ENCODE measurements at regions of chr1 and their contacts with region 1.

Region 1: GRCh38 chr1:181134543-181135362 is 46.3 kb downstream of the IER5 start:
- DNase-seq: peak; percentile 84 to 92
- H3K4me3 ChIP-seq: peak overlapping the region; percentile 26; the same call in 1 of the 2 replicates
- H3K27ac ChIP-seq: peak overlapping the region; percentile 92
- H3K4me1 ChIP-seq: peaks cover 71% of the 10 kb centered on the region
- H3K27me3 ChIP-seq: no peaks in the 10 kb centered on the region
- CTCF ChIP-seq: no peak

Region 2: DNA sequence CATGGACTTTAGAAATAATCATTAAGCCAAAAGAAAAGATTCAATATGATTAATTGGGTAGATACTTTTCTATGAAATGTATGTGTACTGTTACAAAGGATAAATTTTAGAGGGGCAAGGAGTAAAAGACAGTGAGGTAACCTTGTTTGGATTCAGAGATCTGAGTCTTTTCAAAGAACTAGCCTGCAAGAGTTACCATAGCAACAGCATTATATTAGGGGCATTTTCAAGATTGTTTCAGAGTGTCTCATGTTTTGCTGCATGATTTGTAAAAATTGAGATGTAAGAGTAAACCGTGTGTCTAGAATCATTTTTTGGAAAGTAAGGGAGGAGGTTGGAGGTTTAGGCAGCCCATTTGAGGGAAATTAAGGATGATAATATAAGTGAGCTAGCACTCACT is 292.7 kb before region 1 on chr1:
- CTCF ChIA-PET with region 1: no interaction called
- POLR2A ChIA-PET with region 1: no interaction called
- intact Hi-C with region 1: no loop called
- DNase-seq: no peak
- H3K4me3 ChIP-seq: no peak overlapping the region
- H3K27ac ChIP-seq: no peak overlapping the region
- H3K4me1 ChIP-seq: no peaks in the 10 kb centered on the region
- H3K27me3 ChIP-seq: no peaks in the 10 kb centered on the region
- CTCF ChIP-seq: no peak

Region 3: DNA sequence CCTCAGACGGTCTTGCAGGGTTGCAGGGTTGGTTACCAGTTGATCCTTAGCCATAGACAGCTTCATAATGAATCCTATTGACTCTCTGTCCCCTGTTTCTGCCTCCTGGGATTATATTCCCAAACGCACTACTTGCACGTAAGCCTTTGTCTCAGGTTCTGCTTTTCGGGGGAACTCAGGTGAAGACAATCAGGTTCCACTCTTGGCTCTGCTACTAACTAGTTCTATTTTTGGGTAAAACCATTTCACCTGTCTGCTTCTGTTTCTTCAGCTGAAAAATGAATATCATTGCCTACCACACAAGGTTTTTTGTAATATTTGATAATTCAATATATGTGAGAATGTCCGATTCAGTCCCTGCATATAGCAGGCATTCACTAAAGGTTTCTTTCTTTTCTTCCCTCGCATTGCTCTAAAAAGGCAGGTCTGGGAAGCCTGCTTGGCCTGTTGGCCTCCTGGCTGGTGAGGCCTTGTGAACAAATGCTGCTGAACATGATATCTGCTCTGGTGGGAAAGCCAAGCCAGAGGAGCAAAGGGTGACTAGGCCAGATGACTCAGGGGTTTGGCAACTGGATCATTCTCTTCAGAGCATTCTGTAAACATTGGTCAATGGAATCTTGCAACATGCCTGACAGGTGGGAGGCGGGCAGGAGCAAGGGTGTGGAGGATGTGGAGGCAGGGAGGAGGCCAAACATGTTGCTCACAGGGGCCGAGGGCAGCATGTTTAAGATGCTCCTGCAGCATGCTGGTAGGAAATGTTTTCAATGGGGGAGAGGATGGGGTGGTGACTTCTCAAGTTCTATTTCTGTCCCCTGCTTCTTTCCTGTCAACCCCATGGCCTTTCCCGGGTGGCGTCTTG is 22.5 kb before region 1 on chr1:
- CTCF ChIA-PET with region 1: interaction called, 7 read pairs
- POLR2A ChIA-PET with region 1: interaction called, 9 read pairs
- intact Hi-C with region 1: loop called (anchors 1 kb)
- DNase-seq: peak; percentile 94 to 99
- H3K4me3 ChIP-seq: peak overlapping the region; percentile 43; the same call in 1 of the 2 replicates
- H3K27ac ChIP-seq: peak overlapping the region; percentile 99
- H3K4me1 ChIP-seq: peaks cover 78% of the 10 kb centered on the region
- H3K27me3 ChIP-seq: no peaks in the 10 kb centered on the region
- CTCF ChIP-seq: no peak

Region 4: DNA sequence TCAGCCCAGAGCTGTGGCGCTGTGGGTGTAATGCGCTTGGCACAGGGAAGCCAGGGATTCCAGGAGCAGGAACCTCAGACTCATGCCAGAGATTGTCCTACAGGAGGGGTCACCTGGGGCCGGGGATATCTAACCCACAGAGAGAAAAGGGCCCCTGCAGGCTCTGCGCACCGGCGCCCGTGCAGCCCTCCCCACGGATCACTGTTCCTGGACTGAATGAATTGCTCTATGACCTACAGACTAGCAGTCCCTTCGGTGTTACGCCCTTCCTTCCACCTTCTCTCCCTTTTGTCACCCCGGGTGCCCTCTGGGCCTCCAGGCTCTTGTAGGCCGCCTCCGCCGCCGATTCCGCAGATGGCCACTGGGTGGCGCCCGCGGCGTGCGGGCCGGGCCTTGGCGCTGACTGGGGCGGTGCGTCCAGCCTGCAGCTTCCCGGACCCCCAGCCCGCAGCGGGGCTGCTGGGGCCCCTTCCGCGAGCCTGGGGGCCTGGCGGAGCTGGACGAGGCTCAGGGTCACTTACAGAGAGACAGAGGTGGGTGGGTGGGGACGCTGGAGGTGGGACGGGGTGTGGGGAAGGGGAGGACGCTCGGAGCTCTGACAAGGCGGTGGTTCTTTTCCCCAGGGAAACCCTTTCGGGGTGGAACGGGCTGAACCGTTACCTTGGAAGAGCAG is 55.1 kb after region 1 on chr1:
- CTCF ChIA-PET with region 1: no interaction called
- POLR2A ChIA-PET with region 1: no interaction called
- intact Hi-C with region 1: no loop called
- DNase-seq: peak in 1 of 2 experiments; percentile 70
- H3K4me3 ChIP-seq: no peak overlapping the region
- H3K27ac ChIP-seq: no peak overlapping the region
- H3K4me1 ChIP-seq: no peaks in the 10 kb centered on the region
- H3K27me3 ChIP-seq: peaks cover 43% of the 10 kb centered on the region
- CTCF ChIP-seq: peak; percentile 95

Measured in PC-9 (cell line).